ENCODE measurements at regions of chr12 and their contacts with region 1.

Region 1: DNA sequence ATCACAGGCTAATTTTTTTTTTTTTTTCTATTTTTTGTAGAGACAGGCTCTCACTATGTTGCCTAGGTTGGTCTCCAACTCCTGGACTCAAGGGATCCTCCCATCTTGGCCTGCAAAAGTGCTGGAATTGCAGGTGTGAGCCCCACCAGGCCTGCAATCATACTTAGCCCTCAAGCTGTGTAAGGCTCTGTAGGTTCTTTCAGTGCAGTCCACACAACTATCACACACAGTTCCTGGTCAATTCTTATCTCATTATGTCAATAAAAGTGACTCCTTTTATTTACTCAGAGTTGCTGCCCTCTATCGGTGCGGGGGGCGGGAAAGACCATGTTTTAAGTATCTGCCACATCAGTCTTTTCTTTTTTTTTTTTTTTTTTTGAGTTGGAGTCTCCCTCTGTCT is 29.0 kb downstream of the SLC2A3 start:
- DNase-seq: peak; percentile 33
- H3K4me3 ChIP-seq: no peak overlapping the region
- H3K27ac ChIP-seq: no peak overlapping the region
- H3K4me1 ChIP-seq: peaks cover 0 to 7% (median 0%) of the 10 kb centered on the region in 4 donors
- H3K27me3 ChIP-seq: no peaks in the 10 kb centered on the region
- CTCF ChIP-seq: peak in 4 of 5 experiments; percentile 21 to 36 (median 24)
- EP300 ChIP-seq: no peak
- POLR2A ChIP-seq: no peak

Region 2: DNA sequence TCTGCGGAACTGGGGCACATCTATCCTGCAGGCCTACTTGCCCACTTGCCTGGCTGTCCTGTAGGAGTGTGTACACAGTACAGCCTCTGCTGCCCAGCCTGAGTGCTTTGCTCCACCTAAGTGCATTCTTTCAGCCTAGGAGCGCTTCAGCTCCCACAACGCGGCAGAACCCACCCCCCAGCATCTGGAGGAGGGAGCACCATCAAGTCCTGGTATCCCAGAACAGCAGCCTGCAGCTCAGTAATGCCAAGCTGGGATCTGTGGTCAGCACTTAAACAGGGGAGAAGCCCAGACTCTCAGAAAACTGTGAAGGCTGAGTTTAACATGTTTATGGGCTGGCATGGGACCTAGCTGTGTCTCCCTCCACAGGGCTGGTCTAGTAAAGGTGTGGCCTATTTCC is 323.4 kb before region 1 on chr12:
- in situ Hi-C with region 1: no loop called
- intact Hi-C with region 1: no loop called
- DNase-seq: no peak
- H3K4me3 ChIP-seq: no peak overlapping the region
- H3K27ac ChIP-seq: no peak overlapping the region
- H3K4me1 ChIP-seq: no peaks in the 10 kb centered on the region
- H3K27me3 ChIP-seq: no peaks in the 10 kb centered on the region
- CTCF ChIP-seq: no peak
- EP300 ChIP-seq: no peak
- POLR2A ChIP-seq: no peak

Region 3: GRCh38 chr12:7797698-7798398 is 109.2 kb before region 1 on chr12:
- in situ Hi-C with region 1: loop called in 1 of 4 experiments (anchors 5 kb)
- intact Hi-C with region 1: no loop called
- DNase-seq: no peak
- H3K4me3 ChIP-seq: no peak overlapping the region
- H3K27ac ChIP-seq: no peak overlapping the region
- H3K4me1 ChIP-seq: no peaks in the 10 kb centered on the region
- H3K27me3 ChIP-seq: no peaks in the 10 kb centered on the region
- CTCF ChIP-seq: no peak
- EP300 ChIP-seq: no peak
- POLR2A ChIP-seq: no peak